ENCODE measurements at regions of chr10 and their contacts with region 1.

Region 1: GRCh38 chr10:102951316-102951715 is 33.2 kb downstream of the CNNM2 start:
- DNase-seq: no peak
- ATAC-seq: no peak
- H3K4me3 Mint-ChIP-seq: no peak overlapping the region
- H3K27ac Mint-ChIP-seq: no peak overlapping the region
- H3K4me1 Mint-ChIP-seq: no peaks in the 10 kb centered on the region
- H3K27me3 Mint-ChIP-seq: no peaks in the 10 kb centered on the region
- CTCF ChIP-seq: no peak

Region 2: GRCh38 chr10:103013416-103013815 is 62.1 kb after region 1 on chr10:
- CTCF ChIA-PET with region 1: no interaction called
- POLR2A ChIA-PET with region 1: interaction called, 10 read pairs
- intact Hi-C with region 1: no loop called
- DNase-seq: no peak
- ATAC-seq: no peak
- H3K4me3 Mint-ChIP-seq: no peak overlapping the region
- H3K27ac Mint-ChIP-seq: no peak overlapping the region
- H3K4me1 Mint-ChIP-seq: no peaks in the 10 kb centered on the region
- H3K27me3 Mint-ChIP-seq: no peaks in the 10 kb centered on the region
- CTCF ChIP-seq: no peak

Measured in activated B cell treated with CpG ODN at 0.5 μM for 24 hours (primary cell).